Kidney (tissue), 22 donors: ENCODE measurements at regions of chr6 and their contacts with region 1.

Region 1: DNA sequence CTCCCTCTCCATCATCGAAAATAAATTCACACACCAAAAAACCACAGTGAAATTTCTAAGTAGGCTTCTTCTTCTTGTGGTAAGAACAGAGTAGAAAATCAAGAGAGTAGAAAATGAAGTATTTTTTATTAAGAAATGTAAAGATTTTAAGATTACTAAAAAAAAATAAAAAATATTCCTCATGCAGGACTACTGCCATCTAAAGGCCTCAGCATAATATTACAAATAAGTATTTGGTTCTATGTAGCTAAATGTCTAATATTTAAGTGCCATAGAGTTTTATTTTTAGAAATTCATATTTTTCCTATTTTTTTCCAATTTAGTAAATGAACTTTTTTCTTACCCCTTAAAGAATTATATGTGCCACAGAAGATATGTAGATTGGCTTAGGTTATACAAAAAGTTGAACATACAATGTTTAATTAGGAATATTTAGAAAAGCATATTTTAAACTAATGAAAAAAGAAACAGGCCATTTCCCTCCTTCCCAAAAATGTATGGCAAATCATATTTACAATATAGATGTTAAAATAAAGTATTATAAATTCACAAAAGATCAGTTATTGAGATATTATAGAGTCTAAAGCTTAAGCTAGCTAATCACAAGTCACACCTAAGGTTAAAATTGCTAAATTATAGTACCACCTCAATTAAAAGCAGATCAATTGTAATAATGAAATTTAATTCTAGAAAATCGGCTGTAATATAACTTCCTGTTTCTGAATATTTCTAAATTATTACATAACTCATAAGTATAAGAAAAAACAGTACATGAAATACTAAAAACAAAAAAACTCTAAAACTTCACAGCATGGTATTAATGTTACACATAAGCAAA is 3.5 kb upstream of the NT5DC1 start:
- DNase-seq: no peak
- H3K4me3 ChIP-seq: no peak overlapping the region
- H3K27ac ChIP-seq: no peak overlapping the region
- H3K4me1 ChIP-seq: peaks cover 0 to 14% (median 11%) of the 10 kb centered on the region in 3 donors
- H3K27me3 ChIP-seq: no peaks in the 10 kb centered on the region
- CTCF ChIP-seq: peak; percentile 28

Region 2: GRCh38 chr6:116010790-116011401 is 86.3 kb before region 1 on chr6:
- intact Hi-C with region 1: loop called (anchors 10 kb)
- DNase-seq: peak; percentile 54 to 82 (median 61)
- H3K4me3 ChIP-seq: no peak overlapping the region
- H3K27ac ChIP-seq: peak overlapping the region; percentile 5 to 29
- H3K4me1 ChIP-seq: peaks cover 0 to 27% (median 6%) of the 10 kb centered on the region in 3 donors
- H3K27me3 ChIP-seq: no peaks in the 10 kb centered on the region
- CTCF ChIP-seq: peak; percentile 82